Endothelial cell of umbilical vein (primary cell): ENCODE measurements at regions of chr2 and their contacts with region 1.

Region 1: DNA sequence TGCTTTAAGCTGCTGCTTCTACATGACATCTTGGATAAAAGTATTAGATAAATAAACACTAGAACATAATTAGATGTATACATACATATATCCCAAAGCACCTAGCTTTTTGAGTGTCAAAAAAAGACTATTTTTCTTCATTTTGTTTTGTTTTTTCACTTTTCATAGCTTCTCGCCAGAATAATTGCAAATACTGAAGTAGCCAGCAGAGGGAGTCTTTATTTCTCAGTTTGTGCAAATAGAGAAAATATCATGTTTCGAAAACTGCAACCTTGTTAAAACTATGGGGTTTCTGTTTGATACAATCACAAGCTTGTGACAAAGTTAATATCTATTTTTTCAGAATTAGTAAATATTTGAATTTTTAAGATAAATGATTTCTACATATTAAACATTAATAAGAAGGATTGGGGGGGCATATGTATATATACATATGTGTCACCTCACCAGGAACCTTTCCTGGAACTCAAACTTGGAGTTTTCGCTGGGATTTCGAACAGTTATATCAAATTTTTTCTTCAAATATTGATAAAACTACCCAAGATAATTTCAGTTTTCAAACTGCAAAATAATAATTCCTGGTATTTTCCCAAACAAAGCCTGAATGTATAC is 61.0 kb downstream of the GRB14 start:
- DNase-seq: peak; percentile 67
- H3K4me3 ChIP-seq: no peak overlapping the region
- H3K27ac ChIP-seq: no peak overlapping the region
- H3K4me1 ChIP-seq: peaks cover 22% of the 10 kb centered on the region
- H3K27me3 ChIP-seq: no peaks in the 10 kb centered on the region
- CTCF ChIP-seq: peak; percentile 45 to 47
- POLR2A ChIP-seq: no peak

Region 2: GRCh38 chr2:164538240-164538866 is 21.9 kb before region 1 on chr2:
- CTCF ChIA-PET with region 1: interaction called, 52 read pairs
- POLR2A ChIA-PET with region 1: no interaction called
- dilution Hi-C with region 1: no loop called
- intact Hi-C with region 1: no loop called
- DNase-seq: peak; percentile 56
- H3K4me3 ChIP-seq: no peak overlapping the region
- H3K27ac ChIP-seq: no peak overlapping the region
- H3K4me1 ChIP-seq: peaks cover 5% of the 10 kb centered on the region
- H3K27me3 ChIP-seq: no peaks in the 10 kb centered on the region
- CTCF ChIP-seq: peak; percentile 58 to 68
- POLR2A ChIP-seq: no peak

Region 3: GRCh38 chr2:164581050-164581449 is 20.8 kb after region 1 on chr2:
- CTCF ChIA-PET with region 1: interaction called, 83 read pairs
- POLR2A ChIA-PET with region 1: no interaction called
- dilution Hi-C with region 1: no loop called
- intact Hi-C with region 1: no loop called
- DNase-seq: no peak
- H3K4me3 ChIP-seq: no peak overlapping the region
- H3K27ac ChIP-seq: no peak overlapping the region
- H3K4me1 ChIP-seq: no peaks in the 10 kb centered on the region
- H3K27me3 ChIP-seq: no peaks in the 10 kb centered on the region
- CTCF ChIP-seq: no peak
- POLR2A ChIP-seq: no peak

Region 4: DNA sequence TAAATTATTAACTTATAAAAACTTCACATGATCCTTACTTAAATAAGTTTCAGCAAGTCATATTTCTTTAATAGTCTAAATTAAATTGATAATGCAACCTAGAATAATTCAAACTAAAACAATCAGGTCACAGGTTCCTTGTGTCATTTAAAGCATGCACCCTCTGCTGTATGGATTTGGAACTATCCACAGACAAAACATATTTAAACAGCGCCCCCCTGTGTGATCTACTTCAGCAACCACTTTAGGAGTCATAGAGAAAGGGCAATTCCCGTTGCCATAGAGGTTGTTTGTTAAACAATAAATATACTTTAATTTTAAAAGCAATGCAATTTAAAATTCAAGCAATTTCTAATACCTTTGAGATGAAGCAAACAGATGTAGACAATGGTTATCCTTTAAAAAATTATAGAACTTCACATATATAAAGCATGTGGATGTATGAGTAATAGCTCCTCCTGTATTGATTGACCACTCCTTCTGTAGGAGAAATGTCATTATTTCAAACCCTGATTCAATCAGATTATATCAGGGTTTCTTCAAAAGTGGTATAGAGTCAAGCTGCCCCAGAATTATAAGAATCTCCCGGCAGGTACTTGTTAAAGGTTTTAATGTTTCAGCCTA is 39.8 kb after region 1 on chr2:
- CTCF ChIA-PET with region 1: interaction called, 233 read pairs
- POLR2A ChIA-PET with region 1: no interaction called
- dilution Hi-C with region 1: no loop called
- intact Hi-C with region 1: loop called (anchors 1 kb)
- DNase-seq: peak; percentile 91
- H3K4me3 ChIP-seq: no peak overlapping the region
- H3K27ac ChIP-seq: peak overlapping the region; percentile 31
- H3K4me1 ChIP-seq: peaks cover 20% of the 10 kb centered on the region
- H3K27me3 ChIP-seq: no peaks in the 10 kb centered on the region
- CTCF ChIP-seq: peak; percentile 77 to 86
- POLR2A ChIP-seq: no peak

Region 5: DNA sequence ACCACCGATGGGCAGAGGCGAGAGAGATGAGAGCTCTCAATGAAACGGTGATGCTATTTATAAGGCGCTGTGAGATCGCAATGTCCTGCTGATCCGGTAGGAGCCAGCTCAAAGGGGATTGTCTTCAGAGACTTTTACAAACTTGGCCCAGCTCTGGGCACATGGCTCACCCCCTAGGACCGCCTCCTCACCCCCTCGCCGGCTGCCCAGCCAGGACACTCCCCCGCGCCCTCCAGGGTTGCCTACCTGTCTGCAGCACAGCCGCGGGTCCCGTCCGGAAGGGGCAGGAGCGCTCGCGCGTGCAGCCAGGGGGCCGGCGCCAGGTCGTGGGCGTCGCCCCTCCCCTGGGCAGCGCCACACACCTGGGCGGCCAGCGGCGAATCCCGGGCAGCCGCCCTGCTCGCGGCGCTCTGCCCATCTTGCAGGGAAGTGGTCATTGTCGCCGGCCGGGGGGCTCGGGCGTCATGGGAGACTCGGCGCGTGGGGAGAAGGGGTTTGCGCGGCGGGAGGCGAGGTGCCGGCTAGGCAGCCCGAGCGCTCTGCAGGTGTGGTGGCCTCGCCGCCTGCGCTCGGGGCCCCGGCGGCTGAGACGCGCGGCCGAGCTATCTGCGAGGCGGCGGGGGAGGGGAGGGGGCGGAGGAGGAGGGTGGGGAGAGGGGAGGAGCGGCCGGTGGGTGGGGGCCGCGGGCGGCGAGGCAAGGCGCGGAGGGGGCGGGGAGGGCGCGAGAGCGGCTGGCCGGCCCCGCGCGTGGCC is 60.8 kb after region 1 on chr2 and contains the start of gene GRB14:
- CTCF ChIA-PET with region 1: interaction called, 11 read pairs
- POLR2A ChIA-PET with region 1: no interaction called
- dilution Hi-C with region 1: no loop called
- intact Hi-C with region 1: no loop called
- DNase-seq: peak; percentile 34
- H3K4me3 ChIP-seq: peak within 1 kb of the TSS; percentile 55 to 67 (median 66)
- H3K27ac ChIP-seq: no peak within 1 kb of the TSS
- H3K4me1 ChIP-seq: peaks cover 42% of the 10 kb centered on the region
- H3K27me3 ChIP-seq: no peaks in the 10 kb centered on the region
- CTCF ChIP-seq: no peak
- POLR2A ChIP-seq: peak; percentile 25
- total RNA-seq, gene GRB14: 2.7 and 10.3 TPM in 2 replicates

Region 6: DNA sequence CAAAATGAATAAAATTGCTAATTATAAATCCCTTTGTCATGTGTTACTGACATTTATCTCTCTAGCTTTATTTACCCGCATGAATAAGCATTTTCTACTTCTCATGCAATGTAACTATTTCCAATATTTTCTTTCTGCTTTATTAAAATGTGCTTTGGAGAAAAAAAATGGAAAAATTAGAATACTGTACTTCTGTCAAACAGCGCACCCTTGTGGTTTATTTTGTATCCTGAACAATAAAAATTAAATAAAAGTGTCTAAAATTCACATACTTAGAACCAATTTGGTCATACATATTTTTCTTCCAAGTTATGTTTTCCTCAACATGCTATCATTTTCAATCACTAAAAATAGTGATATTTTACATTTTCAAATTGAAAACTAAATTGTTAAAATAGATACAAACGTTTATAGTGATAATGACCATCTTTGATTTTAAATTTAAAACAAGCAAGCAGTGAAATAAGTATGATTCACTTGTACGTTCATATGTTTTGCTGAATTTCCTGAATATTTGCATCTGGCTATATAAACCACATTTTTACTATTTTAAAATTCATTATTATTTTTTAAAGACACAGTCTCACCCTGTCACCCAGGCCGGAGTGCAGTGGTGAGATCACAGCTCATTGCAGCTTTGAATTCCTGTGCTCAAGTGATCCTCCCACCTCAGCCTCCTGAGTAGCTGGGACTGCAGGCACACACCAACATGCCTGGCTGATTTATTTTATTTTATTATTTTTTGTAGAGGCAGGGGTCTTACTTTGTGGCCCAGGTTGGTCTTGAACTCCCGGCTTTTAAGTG is 156.9 kb after region 1 on chr2:
- CTCF ChIA-PET with region 1: interaction called, 16 read pairs
- POLR2A ChIA-PET with region 1: no interaction called
- dilution Hi-C with region 1: no loop called
- intact Hi-C with region 1: loop called (anchors 1 kb)
- DNase-seq: peak; percentile 46
- H3K4me3 ChIP-seq: no peak overlapping the region
- H3K27ac ChIP-seq: no peak overlapping the region
- H3K4me1 ChIP-seq: no peaks in the 10 kb centered on the region
- H3K27me3 ChIP-seq: no peaks in the 10 kb centered on the region
- CTCF ChIP-seq: peak; percentile 10 to 37
- POLR2A ChIP-seq: no peak

Region 7: DNA sequence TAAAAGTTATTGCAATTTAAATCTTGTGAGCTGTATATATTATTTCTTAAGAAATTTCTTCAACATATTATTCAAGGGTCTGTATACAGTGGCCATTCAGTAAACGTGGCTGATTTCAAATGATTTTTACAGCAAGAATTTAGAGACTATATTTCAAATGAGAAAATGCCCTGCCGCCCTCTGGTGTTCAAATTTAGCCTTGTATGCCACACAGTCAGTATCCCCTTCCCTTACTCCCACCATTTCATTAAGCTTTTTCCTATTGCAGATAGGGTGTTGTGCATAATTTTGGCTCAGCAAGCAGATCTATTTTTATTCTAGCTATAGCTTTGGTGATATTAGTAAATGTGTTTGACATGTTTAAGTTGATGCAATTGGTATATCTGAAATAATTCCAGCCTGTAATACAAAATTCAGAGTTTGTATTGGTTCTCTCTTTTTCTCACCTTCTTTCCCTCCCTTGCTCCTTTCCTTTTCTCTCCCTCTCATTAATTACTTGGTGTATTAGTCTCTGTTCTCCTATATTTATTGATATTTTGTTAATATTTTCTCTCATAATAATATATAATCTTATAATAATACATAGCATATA is 1956.5 kb after region 1 on chr2:
- CTCF ChIA-PET with region 1: no interaction called
- POLR2A ChIA-PET with region 1: no interaction called
- dilution Hi-C with region 1: no loop called
- intact Hi-C with region 1: no loop called
- DNase-seq: peak; percentile 61
- H3K4me3 ChIP-seq: no peak overlapping the region
- H3K27ac ChIP-seq: no peak overlapping the region
- H3K4me1 ChIP-seq: no peaks in the 10 kb centered on the region
- H3K27me3 ChIP-seq: no peaks in the 10 kb centered on the region
- CTCF ChIP-seq: peak; percentile 34 to 59
- POLR2A ChIP-seq: no peak